Caco-2 (cell line): ENCODE measurements at regions of chr7 and their contacts with region 1.

Region 1: GRCh38 chr7:97104719-97105238 is 12.7 kb upstream of the SDHAF3 start:
- DNase-seq: peak; percentile 79 to 90
- H3K4me3 ChIP-seq: no peak overlapping the region
- H3K4me3 Mint-ChIP-seq: no peak overlapping the region
- H3K27ac Mint-ChIP-seq: no peak overlapping the region
- H3K4me1 ChIP-seq: no peaks in the 10 kb centered on the region
- H3K4me1 Mint-ChIP-seq: no peaks in the 10 kb centered on the region
- H3K27me3 ChIP-seq: no peaks in the 10 kb centered on the region
- H3K27me3 Mint-ChIP-seq: peaks cover 14% of the 10 kb centered on the region
- CTCF ChIP-seq: peak; percentile 81 to 88

Region 2: DNA sequence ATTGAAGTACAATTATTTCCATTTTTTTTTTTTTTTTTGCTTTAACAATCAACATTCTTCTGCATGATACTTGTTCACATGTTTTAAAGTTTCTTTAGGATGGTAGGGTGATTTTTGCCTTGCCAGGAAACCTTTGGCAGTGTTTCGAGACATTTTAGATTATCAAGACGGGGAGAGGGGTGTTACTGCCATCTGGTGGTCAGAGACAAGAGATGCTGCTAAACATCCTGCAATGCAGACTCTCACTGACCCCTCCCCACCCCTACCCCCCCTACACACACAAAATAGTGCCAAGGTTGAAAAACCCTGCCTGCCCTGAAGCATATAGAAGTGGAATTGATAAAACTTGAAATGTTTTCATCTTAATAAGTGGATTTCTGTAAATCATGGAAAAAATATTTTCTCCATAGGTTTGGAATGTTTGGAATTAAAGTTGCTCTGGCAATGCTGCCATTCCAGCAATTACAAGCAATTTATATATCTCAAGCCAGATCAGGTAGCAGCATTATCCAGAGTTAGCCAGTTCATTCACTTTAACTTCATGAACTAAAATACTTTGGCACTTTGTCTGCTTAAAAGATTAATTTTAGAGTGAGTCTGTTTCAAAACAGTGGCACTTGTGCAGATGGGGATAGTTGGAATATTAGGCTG is 74.8 kb after region 1 on chr7:
- CTCF ChIA-PET with region 1: interaction called, 5 read pairs
- POLR2A ChIA-PET with region 1: no interaction called
- intact Hi-C with region 1: loop called (anchors 2 kb)
- DNase-seq: peak; percentile 53 to 63
- H3K4me3 ChIP-seq: no peak overlapping the region
- H3K4me3 Mint-ChIP-seq: no peak overlapping the region
- H3K27ac Mint-ChIP-seq: no peak overlapping the region
- H3K4me1 ChIP-seq: no peaks in the 10 kb centered on the region
- H3K4me1 Mint-ChIP-seq: no peaks in the 10 kb centered on the region
- H3K27me3 ChIP-seq: no peaks in the 10 kb centered on the region
- H3K27me3 Mint-ChIP-seq: no peaks in the 10 kb centered on the region
- CTCF ChIP-seq: peak; percentile 84 to 86

Region 3: DNA sequence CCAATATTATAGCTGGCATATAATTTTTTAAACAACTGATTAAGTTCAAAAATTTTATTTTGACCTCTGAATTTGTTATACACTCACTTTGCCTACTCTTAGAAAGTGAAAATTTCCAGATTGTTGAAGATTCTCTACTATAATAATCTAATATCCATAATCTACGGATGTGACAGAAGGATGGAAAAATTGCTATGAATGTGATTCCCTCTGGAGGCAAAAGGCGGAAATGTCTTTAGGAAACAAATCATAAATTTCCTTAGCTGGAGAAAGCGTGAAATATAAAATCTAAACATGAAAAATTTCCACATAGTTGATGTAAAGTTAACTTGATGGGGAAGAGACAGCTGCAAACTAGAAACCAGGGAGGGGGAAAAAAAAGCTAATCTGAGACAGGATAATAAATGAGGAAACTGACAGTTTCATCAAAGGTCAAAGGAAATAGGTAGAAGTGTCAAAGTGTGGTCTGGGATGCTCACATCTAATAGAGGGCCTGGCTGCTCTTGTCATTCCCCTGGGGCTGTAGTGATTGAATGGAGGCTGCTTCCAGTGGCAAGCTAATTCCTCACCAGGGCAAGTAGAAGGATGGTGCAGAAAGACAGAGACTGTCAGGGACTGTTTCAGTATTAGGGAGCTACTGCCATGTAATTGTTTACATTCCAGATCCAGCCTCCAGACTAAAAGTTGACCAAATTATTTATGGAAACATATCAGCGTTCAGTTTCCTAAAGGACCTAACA is 277.2 kb after region 1 on chr7:
- CTCF ChIA-PET with region 1: no interaction called
- POLR2A ChIA-PET with region 1: no interaction called
- intact Hi-C with region 1: loop called (anchors 5 kb)
- DNase-seq: no peak
- H3K4me3 ChIP-seq: no peak overlapping the region
- H3K4me3 Mint-ChIP-seq: no peak overlapping the region
- H3K27ac Mint-ChIP-seq: no peak overlapping the region
- H3K4me1 ChIP-seq: no peaks in the 10 kb centered on the region
- H3K4me1 Mint-ChIP-seq: no peaks in the 10 kb centered on the region
- H3K27me3 ChIP-seq: no peaks in the 10 kb centered on the region
- H3K27me3 Mint-ChIP-seq: peaks cover 7% of the 10 kb centered on the region
- CTCF ChIP-seq: no peak

Region 4: DNA sequence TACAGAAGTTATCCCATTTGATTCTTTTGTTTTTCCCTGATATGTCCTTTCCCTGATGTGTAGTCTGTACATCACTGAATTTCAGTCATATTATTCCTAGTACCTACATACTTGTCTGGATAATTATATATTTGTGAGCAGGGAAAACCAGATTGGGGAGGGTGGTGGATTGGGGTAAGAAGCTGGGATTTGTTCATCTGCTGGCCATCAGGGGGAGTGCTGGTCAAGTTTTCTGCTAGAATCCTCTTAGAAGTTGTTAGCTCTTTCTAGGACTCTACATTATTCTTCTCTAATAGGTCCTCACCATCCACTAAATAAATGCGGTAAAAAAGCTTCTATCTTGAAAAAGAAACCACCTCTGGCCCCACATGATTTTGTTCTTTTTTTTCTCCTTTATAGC is 394.4 kb after region 1 on chr7:
- CTCF ChIA-PET with region 1: no interaction called
- POLR2A ChIA-PET with region 1: no interaction called
- intact Hi-C with region 1: loop called (anchors 1 kb)
- DNase-seq: peak; percentile 43 to 51
- H3K4me3 ChIP-seq: no peak overlapping the region
- H3K4me3 Mint-ChIP-seq: no peak overlapping the region
- H3K27ac Mint-ChIP-seq: no peak overlapping the region
- H3K4me1 ChIP-seq: no peaks in the 10 kb centered on the region
- H3K4me1 Mint-ChIP-seq: no peaks in the 10 kb centered on the region
- H3K27me3 ChIP-seq: no peaks in the 10 kb centered on the region
- H3K27me3 Mint-ChIP-seq: peaks cover 7% of the 10 kb centered on the region
- CTCF ChIP-seq: peak; percentile 52 to 76

Region 5: DNA sequence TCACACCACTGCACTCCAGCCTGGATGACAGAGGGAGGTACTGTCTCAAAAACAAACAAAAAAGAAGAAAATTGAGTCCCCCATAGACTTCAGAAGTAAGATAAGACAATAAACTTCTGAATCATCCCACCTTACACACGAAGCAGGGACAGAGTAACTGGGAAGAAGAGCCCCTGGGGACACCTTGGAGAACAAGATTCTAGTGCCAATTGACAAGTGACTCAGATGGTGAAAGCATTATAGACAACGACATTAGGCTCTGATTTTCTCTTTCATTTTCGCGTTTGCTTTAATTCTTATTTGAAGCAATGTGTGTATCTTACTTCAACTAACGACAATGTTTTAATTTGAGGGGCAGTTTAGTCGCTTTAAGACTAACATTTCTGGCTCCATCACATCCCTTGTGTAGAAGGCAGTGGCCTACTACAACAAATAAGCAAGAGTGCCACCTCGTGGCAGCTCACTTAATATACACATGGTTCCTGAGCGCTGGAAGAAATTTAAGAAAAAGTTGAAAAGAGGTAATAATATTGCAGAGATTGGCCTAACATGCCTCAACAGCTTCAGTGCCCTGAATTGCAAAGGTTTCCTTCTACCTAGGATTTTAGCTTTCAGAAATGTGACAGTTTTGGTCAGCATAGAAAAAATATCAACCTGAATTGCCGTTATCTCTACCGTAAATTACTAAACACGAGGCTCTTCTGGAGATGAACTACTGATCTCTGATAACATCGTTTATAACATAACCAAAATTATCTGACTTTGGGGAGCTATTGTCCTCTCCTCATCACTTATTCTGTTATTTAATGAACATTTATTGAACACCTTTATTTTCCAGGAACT is 730.7 kb after region 1 on chr7:
- CTCF ChIA-PET with region 1: interaction called, 3 read pairs
- POLR2A ChIA-PET with region 1: no interaction called
- intact Hi-C with region 1: loop called (anchors 1 kb)
- DNase-seq: peak; percentile 62 to 71
- H3K4me3 ChIP-seq: no peak overlapping the region
- H3K4me3 Mint-ChIP-seq: no peak overlapping the region
- H3K27ac Mint-ChIP-seq: no peak overlapping the region
- H3K4me1 ChIP-seq: no peaks in the 10 kb centered on the region
- H3K4me1 Mint-ChIP-seq: no peaks in the 10 kb centered on the region
- H3K27me3 ChIP-seq: no peaks in the 10 kb centered on the region
- H3K27me3 Mint-ChIP-seq: peaks cover 9% of the 10 kb centered on the region
- CTCF ChIP-seq: peak; percentile 60 to 69

Region 6: GRCh38 chr7:97845622-97846203 is 740.9 kb after region 1 on chr7:
- CTCF ChIA-PET with region 1: interaction called, 3 read pairs
- POLR2A ChIA-PET with region 1: no interaction called
- intact Hi-C with region 1: loop called (anchors 1 kb)
- DNase-seq: peak in 1 of 2 experiments; percentile 24
- H3K4me3 ChIP-seq: no peak overlapping the region
- H3K4me3 Mint-ChIP-seq: no peak overlapping the region
- H3K27ac Mint-ChIP-seq: no peak overlapping the region
- H3K4me1 ChIP-seq: no peaks in the 10 kb centered on the region
- H3K4me1 Mint-ChIP-seq: no peaks in the 10 kb centered on the region
- H3K27me3 ChIP-seq: no peaks in the 10 kb centered on the region
- H3K27me3 Mint-ChIP-seq: no peaks in the 10 kb centered on the region
- CTCF ChIP-seq: peak; percentile 16 to 40